Activated CD4-positive, alpha-beta T cell treated with anti-CD3 and anti-CD28 coated beads, Interleukin-2, amount 10 ng/mL, durations not matched to agents 24 days and 14 days (primary cell): ENCODE measurements at regions of chr2 and their contacts with region 1.

Region 1: GRCh38 chr2:86105252-86105968 is at the start of gene POLR1A:
- DNase-seq: peak; percentile 95
- H3K4me3 Mint-ChIP-seq: peak within 1 kb of the TSS; percentile 94
- H3K27ac Mint-ChIP-seq: peak within 1 kb of the TSS; percentile 96
- H3K4me1 Mint-ChIP-seq: peaks cover 43% of the 10 kb centered on the region
- H3K27me3 Mint-ChIP-seq: no peaks in the 10 kb centered on the region
- total RNA-seq, gene POLR1A: 66.8 and 73.5 TPM in 2 replicates

Region 2: GRCh38 chr2:85327822-85328617 is 777.4 kb before region 1 on chr2 and contains the start of gene TGOLN2:
- intact Hi-C with region 1: loop called (anchors 5 kb)
- DNase-seq: peak; percentile 98
- H3K4me3 Mint-ChIP-seq: peak within 1 kb of the TSS; percentile 95
- H3K27ac Mint-ChIP-seq: peak within 1 kb of the TSS; percentile 99
- H3K4me1 Mint-ChIP-seq: peaks cover 31% of the 10 kb centered on the region
- H3K27me3 Mint-ChIP-seq: no peaks in the 10 kb centered on the region
- total RNA-seq, gene TGOLN2: 89.6 and 94.1 TPM in 2 replicates

Region 3: DNA sequence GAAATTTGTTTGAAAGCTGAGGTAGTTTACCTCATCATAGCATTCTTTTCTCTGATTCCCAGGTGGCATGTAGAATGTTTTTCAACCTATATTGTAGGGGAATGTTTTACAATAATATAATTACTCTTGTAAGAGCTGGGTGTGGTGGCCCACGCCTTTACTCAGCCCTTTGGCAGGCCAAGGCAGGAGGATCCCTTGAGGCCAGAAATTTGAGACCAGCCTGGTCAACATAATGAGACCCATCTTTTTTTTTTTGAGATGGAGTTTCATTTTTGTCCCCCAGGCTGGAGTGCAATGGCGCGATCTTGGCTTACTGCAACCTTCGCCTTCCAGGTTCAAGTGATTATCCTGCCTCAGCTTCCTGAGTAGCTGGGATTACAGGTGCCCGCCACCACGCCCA is 485.8 kb before region 1 on chr2:
- intact Hi-C with region 1: loop called (anchors 5 kb)
- DNase-seq: no peak
- H3K4me3 Mint-ChIP-seq: no peak overlapping the region
- H3K27ac Mint-ChIP-seq: no peak overlapping the region
- H3K4me1 Mint-ChIP-seq: peaks cover 19% of the 10 kb centered on the region
- H3K27me3 Mint-ChIP-seq: no peaks in the 10 kb centered on the region

Region 4: GRCh38 chr2:86140969-86141392 is 35.6 kb after region 1 on chr2:
- intact Hi-C with region 1: loop called (anchors 5 kb)
- DNase-seq: no peak
- H3K4me3 Mint-ChIP-seq: no peak overlapping the region
- H3K27ac Mint-ChIP-seq: peak overlapping the region; percentile 25
- H3K4me1 Mint-ChIP-seq: peaks cover 3% of the 10 kb centered on the region
- H3K27me3 Mint-ChIP-seq: no peaks in the 10 kb centered on the region

Region 5: GRCh38 chr2:86195055-86195807 is 89.8 kb after region 1 on chr2 and contains the start of gene IMMT:
- intact Hi-C with region 1: loop called (anchors 1 kb)
- DNase-seq: peak; percentile 98
- H3K4me3 Mint-ChIP-seq: peak within 1 kb of the TSS; percentile 99
- H3K27ac Mint-ChIP-seq: peak within 1 kb of the TSS; percentile 97
- H3K4me1 Mint-ChIP-seq: peaks cover 36% of the 10 kb centered on the region
- H3K27me3 Mint-ChIP-seq: no peaks in the 10 kb centered on the region
- total RNA-seq, gene IMMT: 181 and 188 TPM in 2 replicates